ENCODE measurements at regions of chr1 and their contacts with region 1.

Region 1: DNA sequence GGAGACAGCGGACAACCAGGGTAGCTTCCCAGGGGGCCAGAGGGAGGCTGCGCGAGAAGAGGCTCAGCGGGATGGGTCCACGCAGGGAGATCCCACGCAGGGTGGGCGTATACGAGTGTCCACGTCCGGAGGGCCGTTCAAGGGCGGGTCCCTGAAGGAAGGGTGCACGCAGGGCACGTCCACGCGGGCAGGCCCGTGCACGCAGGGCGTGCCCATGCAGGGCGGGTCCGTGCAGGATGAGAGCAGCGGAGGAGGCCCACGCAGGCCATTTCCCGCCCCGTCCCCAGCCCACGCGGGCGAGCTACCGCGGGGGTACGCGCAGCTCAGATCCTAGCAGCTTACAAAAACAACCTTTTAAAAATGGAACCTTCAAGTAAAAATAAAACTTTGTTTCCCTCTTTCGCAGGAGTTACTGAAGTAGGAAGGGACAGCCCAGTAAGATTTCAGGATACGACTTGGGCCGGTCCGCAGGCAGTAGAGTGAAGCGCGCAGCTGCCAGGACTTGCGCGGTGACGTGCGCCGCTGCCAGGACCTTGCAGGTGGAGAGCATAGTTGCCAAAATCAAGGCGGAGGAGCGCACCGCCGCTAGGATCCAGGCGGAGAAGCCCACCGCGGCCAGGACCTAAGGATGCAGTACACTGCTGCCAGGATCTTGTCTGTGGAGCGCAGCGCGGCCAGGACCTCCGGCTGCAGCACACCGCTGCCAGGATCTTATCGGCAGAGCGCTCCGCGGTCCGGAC is 416 bp upstream of the RNF187 start:
- DNase-seq: peak; percentile 97
- ATAC-seq: peak; percentile 70
- H3K4me3 ChIP-seq: peak overlapping the region; percentile 74 to 98 (median 93)
- H3K4me3 Mint-ChIP-seq: peak overlapping the region; percentile 97
- H3K27ac ChIP-seq: peak overlapping the region; percentile 100
- H3K27ac Mint-ChIP-seq: peak overlapping the region; percentile 100
- H3K4me1 ChIP-seq: peaks cover 14 to 25% of the 10 kb centered on the region in 2 donors
- H3K4me1 Mint-ChIP-seq: peaks cover 36% of the 10 kb centered on the region
- H3K27me3 ChIP-seq: no peaks in the 10 kb centered on the region
- H3K27me3 Mint-ChIP-seq: no peaks in the 10 kb centered on the region
- CTCF ChIP-seq: no peak

Region 2: DNA sequence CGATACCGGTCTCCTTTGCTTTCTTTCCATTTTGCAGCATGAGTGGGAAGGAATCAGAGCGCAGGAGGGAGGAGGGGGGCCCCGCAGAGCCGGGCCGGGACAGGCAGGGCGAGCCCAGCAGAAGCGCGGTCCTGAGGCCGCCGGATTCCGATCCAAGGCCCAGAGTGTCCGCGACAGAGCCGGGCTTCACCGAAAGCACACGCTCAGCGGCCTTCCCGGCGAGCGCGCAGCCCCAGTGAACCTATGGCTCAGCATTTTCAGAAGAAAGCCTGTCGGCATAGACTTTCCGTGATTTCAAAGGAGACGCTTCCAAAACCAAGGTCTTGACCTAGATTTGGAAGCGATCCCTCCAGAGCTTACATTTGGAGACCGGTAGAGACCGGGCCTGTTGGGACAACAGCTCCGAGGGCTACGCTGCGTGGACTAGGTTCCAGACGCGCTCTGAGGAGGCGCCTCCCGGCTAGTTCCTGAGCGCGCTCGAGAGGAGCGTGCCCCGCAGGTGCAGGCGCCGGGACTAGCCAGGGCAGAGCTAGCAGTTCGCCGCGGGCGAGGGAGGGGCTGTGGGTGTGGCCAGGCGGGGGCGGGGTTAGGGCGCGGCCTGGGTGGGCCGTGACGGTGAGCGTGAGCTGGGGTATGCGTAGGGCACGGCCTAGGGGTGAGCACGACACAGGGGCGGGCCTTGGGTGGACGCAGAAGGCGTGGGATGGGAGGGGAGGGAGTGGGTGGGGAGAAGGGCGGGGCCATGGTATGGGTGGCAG is 699.1 kb before region 1 on chr1:
- CTCF ChIA-PET with region 1: no interaction called
- POLR2A ChIA-PET with region 1: no interaction called
- intact Hi-C with region 1: loop called (anchors 10 kb)
- DNase-seq: peak; percentile 97
- ATAC-seq: peak; percentile 92
- H3K4me3 ChIP-seq: peak overlapping the region; percentile 39 to 79 (median 76)
- H3K4me3 Mint-ChIP-seq: peak overlapping the region; percentile 91
- H3K27ac ChIP-seq: peak overlapping the region; percentile 27 to 57
- H3K27ac Mint-ChIP-seq: peak overlapping the region; percentile 68
- H3K4me1 ChIP-seq: peaks cover 26 to 35% of the 10 kb centered on the region in 2 donors
- H3K4me1 Mint-ChIP-seq: peaks cover 19% of the 10 kb centered on the region
- H3K27me3 ChIP-seq: no peaks in the 10 kb centered on the region
- H3K27me3 Mint-ChIP-seq: no peaks in the 10 kb centered on the region
- CTCF ChIP-seq: no peak

Region 3: GRCh38 chr1:228139944-228140656 is 346.7 kb before region 1 on chr1 and contains the start of gene GUK1:
- CTCF ChIA-PET with region 1: no interaction called
- POLR2A ChIA-PET with region 1: interaction called, 3 read pairs
- intact Hi-C with region 1: loop called (anchors 1 kb)
- DNase-seq: peak; percentile 100
- ATAC-seq: peak; percentile 91
- H3K4me3 ChIP-seq: peak within 1 kb of the TSS; percentile 70 to 87 (median 82)
- H3K4me3 Mint-ChIP-seq: peak within 1 kb of the TSS; percentile 96
- H3K27ac ChIP-seq: peak within 1 kb of the TSS; percentile 95 to 98
- H3K27ac Mint-ChIP-seq: peak within 1 kb of the TSS; percentile 100
- H3K4me1 ChIP-seq: peaks cover 55 to 74% of the 10 kb centered on the region in 2 donors
- H3K4me1 Mint-ChIP-seq: peaks cover 68% of the 10 kb centered on the region
- H3K27me3 ChIP-seq: no peaks in the 10 kb centered on the region
- H3K27me3 Mint-ChIP-seq: no peaks in the 10 kb centered on the region
- CTCF ChIP-seq: no peak
- total RNA-seq, gene GUK1: 123 and 125 TPM in 2 replicates

Region 4: DNA sequence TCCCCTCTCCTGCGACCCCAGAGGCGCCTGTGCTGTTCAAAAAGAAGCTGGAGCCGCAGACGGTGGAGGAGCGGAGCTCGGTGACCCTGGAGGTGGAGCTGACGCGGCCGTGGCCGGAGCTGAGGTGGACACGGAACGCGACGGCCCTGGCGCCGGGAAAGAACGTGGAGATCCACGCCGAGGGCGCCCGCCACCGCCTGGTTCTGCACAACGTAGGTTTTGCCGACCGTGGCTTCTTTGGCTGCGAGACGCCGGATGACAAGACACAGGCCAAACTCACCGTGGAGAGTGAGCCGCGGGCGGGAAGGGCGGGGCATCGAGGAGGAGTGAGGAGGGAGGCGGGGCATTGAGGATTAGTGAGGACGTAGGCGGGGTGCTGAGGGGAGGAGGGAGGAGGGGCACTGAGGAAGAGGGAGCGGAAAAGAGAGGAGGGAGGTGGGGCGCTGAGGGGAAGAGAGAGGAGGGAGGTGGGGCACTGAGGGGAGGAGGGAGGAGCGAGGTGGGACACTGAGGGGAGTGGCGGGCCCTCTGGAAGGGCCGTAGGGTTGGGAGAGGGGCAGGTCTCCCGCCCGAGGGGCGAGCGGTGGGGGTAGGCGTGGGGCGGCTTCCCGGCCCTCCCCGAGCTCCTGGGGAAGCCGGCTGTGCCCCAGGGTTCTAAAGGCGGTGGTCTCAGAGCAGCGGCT is 210.9 kb before region 1 on chr1:
- CTCF ChIA-PET with region 1: no interaction called
- POLR2A ChIA-PET with region 1: interaction called, 3 read pairs
- intact Hi-C with region 1: loop called (anchors 1 kb)
- DNase-seq: peak; percentile 89
- ATAC-seq: peak; percentile 96
- H3K4me3 ChIP-seq: peak overlapping the region in 4 of 5 experiments; percentile 55 to 73 (median 67)
- H3K4me3 Mint-ChIP-seq: peak overlapping the region; percentile 82
- H3K27ac ChIP-seq: peak overlapping the region; percentile 36 to 44
- H3K27ac Mint-ChIP-seq: peak overlapping the region; percentile 53
- H3K4me1 ChIP-seq: peaks cover 5 to 19% of the 10 kb centered on the region in 2 donors
- H3K4me1 Mint-ChIP-seq: peaks cover 11% of the 10 kb centered on the region
- H3K27me3 ChIP-seq: no peaks in the 10 kb centered on the region
- H3K27me3 Mint-ChIP-seq: no peaks in the 10 kb centered on the region
- CTCF ChIP-seq: no peak

Region 5: GRCh38 chr1:228500901-228501871 is 14.4 kb after region 1 on chr1:
- CTCF ChIA-PET with region 1: interaction called, 14 read pairs
- POLR2A ChIA-PET with region 1: interaction called, 7 read pairs
- intact Hi-C with region 1: loop called (anchors 1 kb)
- DNase-seq: peak; percentile 90
- ATAC-seq: peak; percentile 94
- H3K4me3 ChIP-seq: peak overlapping the region in 4 of 5 experiments; percentile 26 to 51 (median 47)
- H3K4me3 Mint-ChIP-seq: peak overlapping the region; percentile 83
- H3K27ac ChIP-seq: peak overlapping the region; percentile 51 to 54
- H3K27ac Mint-ChIP-seq: peak overlapping the region; percentile 86
- H3K4me1 ChIP-seq: peaks cover 20% of the 10 kb centered on the region in 2 donors
- H3K4me1 Mint-ChIP-seq: peaks cover 20% of the 10 kb centered on the region
- H3K27me3 ChIP-seq: peaks cover 0 to 3% (median 0%) of the 10 kb centered on the region in 4 experiments
- H3K27me3 Mint-ChIP-seq: peaks cover 6% of the 10 kb centered on the region
- CTCF ChIP-seq: peak; percentile 91

Measured in B cell (primary cell).